Naive thymus-derived CD4-positive, alpha-beta T cell (primary cell): ENCODE measurements at regions of chr19 and their contacts with region 1.

Region 1: GRCh38 chr19:15091901-15092753 is 10.1 kb downstream of the OR1I1 start:
- DNase-seq: peak in 7 of 9 donors; percentile 45 to 72 (median 67)
- ATAC-seq: peak; percentile 84
- H3K4me3 ChIP-seq: no peak overlapping the region
- H3K4me3 Mint-ChIP-seq: no peak overlapping the region
- H3K27ac ChIP-seq: no peak overlapping the region
- H3K27ac Mint-ChIP-seq: peak overlapping the region in 3 of 9 donors; percentile 32 to 72 (median 53)
- H3K4me1 ChIP-seq: peaks cover 4 to 6% of the 10 kb centered on the region in 2 donors
- H3K4me1 Mint-ChIP-seq: peaks cover 0 to 9% (median 4%) of the 10 kb centered on the region in 7 donors
- H3K27me3 ChIP-seq: no peaks in the 10 kb centered on the region
- H3K27me3 Mint-ChIP-seq: peaks cover 0 to 18% (median 9%) of the 10 kb centered on the region in 5 donors

Region 2: DNA sequence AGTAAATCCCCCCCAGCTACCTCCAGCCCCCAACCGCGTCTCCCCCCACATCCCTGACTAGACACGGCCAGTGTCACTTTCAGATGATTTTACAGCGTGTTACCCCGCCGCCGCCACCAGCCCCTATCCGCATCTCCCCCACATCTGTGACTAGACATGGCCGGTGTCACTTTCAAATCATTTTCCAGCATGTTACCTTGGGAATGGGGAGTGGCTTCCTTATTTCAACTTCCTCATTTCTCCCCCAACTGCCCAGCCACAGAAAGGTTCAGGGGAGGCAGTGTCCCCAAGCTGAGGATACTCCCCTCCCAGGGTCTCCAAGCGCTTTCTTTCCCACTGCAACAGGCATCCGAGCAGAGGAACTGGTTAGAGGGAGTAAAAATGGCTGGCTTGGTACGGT is 904.6 kb before region 1 on chr19:
- CTCF ChIA-PET with region 1: no interaction called
- POLR2A ChIA-PET with region 1: no interaction called
- intact Hi-C with region 1: no loop called
- DNase-seq: no peak
- ATAC-seq: no peak
- H3K4me3 ChIP-seq: no peak overlapping the region
- H3K4me3 Mint-ChIP-seq: no peak overlapping the region
- H3K27ac ChIP-seq: no peak overlapping the region
- H3K27ac Mint-ChIP-seq: peak overlapping the region in 1 of 9 donors; percentile 78
- H3K4me1 ChIP-seq: no peaks in the 10 kb centered on the region
- H3K4me1 Mint-ChIP-seq: peaks cover 8 to 22% (median 17%) of the 10 kb centered on the region in 7 donors
- H3K27me3 ChIP-seq: no peaks in the 10 kb centered on the region
- H3K27me3 Mint-ChIP-seq: no peaks in the 10 kb centered on the region

Region 3: DNA sequence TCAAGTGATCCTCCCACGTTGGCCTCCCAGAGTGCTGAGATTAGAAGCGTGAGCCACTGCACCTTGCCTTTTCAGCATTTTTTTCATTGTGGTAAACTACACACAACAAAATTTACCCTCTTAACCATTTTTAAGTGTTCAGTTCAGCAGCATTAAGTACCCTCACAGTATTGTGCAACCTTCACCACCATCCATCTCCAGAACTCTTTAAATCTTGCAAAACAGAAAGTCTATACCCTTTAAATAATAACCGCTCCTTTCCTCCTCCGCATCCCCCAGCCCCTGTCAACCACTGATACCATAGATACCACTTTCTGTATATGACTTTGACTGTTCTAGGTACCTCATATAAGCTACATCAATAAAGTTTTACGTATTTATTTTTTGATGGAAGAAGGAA is 63.6 kb before region 1 on chr19:
- CTCF ChIA-PET with region 1: no interaction called
- POLR2A ChIA-PET with region 1: no interaction called
- intact Hi-C with region 1: no loop called
- DNase-seq: no peak
- ATAC-seq: no peak
- H3K4me3 ChIP-seq: no peak overlapping the region
- H3K4me3 Mint-ChIP-seq: no peak overlapping the region
- H3K27ac ChIP-seq: no peak overlapping the region
- H3K27ac Mint-ChIP-seq: no peak overlapping the region
- H3K4me1 ChIP-seq: no peaks in the 10 kb centered on the region
- H3K4me1 Mint-ChIP-seq: no peaks in the 10 kb centered on the region
- H3K27me3 ChIP-seq: no peaks in the 10 kb centered on the region
- H3K27me3 Mint-ChIP-seq: peaks cover 0 to 14% (median 8%) of the 10 kb centered on the region in 5 donors

Region 4: GRCh38 chr19:15125232-15126067 is 33.3 kb after region 1 on chr19:
- CTCF ChIA-PET with region 1: interaction called, 3 read pairs
- POLR2A ChIA-PET with region 1: interaction called, 6 read pairs
- intact Hi-C with region 1: loop called in 1 of 2 experiments (anchors 1 kb)
- DNase-seq: peak; percentile 94 to 98 (median 96)
- ATAC-seq: peak; percentile 93
- H3K4me3 ChIP-seq: peak overlapping the region; percentile 90
- H3K4me3 Mint-ChIP-seq: peak overlapping the region; percentile 89 to 100 (median 98)
- H3K27ac ChIP-seq: peak overlapping the region; percentile 92
- H3K27ac Mint-ChIP-seq: peak overlapping the region; percentile 91 to 100 (median 97)
- H3K4me1 ChIP-seq: peaks cover 0 to 25% of the 10 kb centered on the region in 2 donors
- H3K4me1 Mint-ChIP-seq: peaks cover 27 to 59% (median 44%) of the 10 kb centered on the region in 7 donors
- H3K27me3 ChIP-seq: no peaks in the 10 kb centered on the region
- H3K27me3 Mint-ChIP-seq: peaks cover 0 to 2% (median 0%) of the 10 kb centered on the region in 5 donors

Region 5: DNA sequence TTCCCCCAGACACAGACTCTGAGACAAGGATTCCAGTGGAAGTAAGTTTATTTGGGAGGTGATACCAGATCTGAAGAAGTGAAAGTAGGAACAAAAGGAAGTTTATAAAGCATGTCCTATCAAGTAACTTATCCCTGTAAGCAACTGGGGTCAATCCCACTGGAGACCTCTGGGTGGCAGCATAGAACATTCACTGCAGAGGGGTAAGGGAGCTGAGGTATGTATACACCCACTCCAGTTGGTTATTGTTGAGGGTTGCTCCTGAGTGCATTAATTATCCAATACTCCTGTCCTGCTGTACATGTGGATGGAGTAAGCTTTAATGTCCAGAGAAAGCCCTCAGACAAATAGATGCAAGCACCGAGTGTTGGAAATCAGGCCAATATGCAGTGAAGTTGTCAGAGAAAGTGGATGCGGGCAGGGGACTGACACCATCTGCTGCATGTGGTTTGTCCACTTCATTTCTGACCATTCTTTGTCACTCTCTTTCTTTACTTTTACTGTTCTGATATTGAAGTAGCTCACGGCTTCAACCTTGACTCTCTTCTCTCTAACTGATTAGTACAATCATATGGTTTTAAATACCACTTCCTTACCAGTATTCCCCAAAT is 62.0 kb after region 1 on chr19:
- CTCF ChIA-PET with region 1: interaction called, 30 read pairs
- POLR2A ChIA-PET with region 1: no interaction called
- intact Hi-C with region 1: loop called (anchors 1 kb)
- DNase-seq: peak in 1 of 9 donors; percentile 8
- ATAC-seq: peak; percentile 63
- H3K4me3 ChIP-seq: no peak overlapping the region
- H3K4me3 Mint-ChIP-seq: no peak overlapping the region
- H3K27ac ChIP-seq: no peak overlapping the region
- H3K27ac Mint-ChIP-seq: no peak overlapping the region
- H3K4me1 ChIP-seq: no peaks in the 10 kb centered on the region
- H3K4me1 Mint-ChIP-seq: peaks cover 4 to 14% (median 7%) of the 10 kb centered on the region in 7 donors
- H3K27me3 ChIP-seq: no peaks in the 10 kb centered on the region
- H3K27me3 Mint-ChIP-seq: peaks cover 5 to 12% (median 8%) of the 10 kb centered on the region in 5 donors

Region 6: DNA sequence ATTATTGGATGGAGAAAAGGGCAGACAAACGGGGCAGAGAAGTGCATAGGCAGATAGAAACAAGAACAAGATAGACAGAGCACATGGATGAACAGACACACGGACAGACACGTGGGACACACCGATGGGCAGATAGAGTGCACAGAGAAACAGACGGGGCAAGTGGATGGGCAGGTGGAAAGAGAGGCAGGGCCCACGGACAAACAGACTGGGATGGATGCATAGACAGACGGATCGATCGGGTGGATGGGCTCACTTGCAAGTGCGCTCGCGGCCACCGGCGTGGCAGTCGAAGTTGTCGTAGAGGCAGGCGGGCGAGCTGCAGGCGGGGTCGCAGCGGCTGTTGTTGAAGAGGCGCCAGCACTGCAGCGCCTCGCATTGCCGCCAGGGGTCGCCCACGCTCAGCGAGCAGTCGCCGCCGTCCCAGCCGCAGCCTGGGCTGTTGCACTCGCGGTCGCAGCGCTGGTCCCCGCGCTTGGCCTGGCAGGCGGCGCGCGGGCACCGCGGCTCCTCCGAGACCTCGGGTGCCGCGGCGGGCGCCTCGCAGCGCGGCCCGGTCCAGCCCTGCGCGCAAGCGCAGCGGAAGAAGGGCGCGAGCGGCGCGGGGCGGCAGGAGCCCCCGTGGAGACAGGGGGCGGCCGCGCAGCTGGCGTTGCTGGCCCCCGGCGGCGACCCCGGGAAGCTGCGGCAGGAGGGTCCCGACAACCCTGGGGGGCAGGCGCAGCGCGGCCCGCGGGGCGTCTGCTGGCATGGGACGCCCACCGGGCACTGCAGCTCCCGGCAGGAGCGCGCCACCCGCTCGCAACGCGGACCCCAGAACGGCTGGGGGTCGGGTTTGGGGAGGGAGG is 85.4 kb after region 1 on chr19:
- CTCF ChIA-PET with region 1: no interaction called
- POLR2A ChIA-PET with region 1: no interaction called
- intact Hi-C with region 1: loop called in 1 of 2 experiments (anchors 1 kb)
- DNase-seq: peak; percentile 66 to 88 (median 82)
- ATAC-seq: peak; percentile 99
- H3K4me3 ChIP-seq: no peak overlapping the region
- H3K4me3 Mint-ChIP-seq: peak overlapping the region; percentile 29 to 84 (median 53)
- H3K27ac ChIP-seq: no peak overlapping the region
- H3K27ac Mint-ChIP-seq: peak overlapping the region in 1 of 9 donors; percentile 47
- H3K4me1 ChIP-seq: peaks cover 0 to 5% of the 10 kb centered on the region in 2 donors
- H3K4me1 Mint-ChIP-seq: peaks cover 4 to 8% (median 5%) of the 10 kb centered on the region in 7 donors
- H3K27me3 ChIP-seq: no peaks in the 10 kb centered on the region
- H3K27me3 Mint-ChIP-seq: peaks cover 0 to 20% (median 9%) of the 10 kb centered on the region in 5 donors

Region 7: GRCh38 chr19:15252398-15253018 is 160.4 kb after region 1 on chr19:
- CTCF ChIA-PET with region 1: interaction called, 10 read pairs
- POLR2A ChIA-PET with region 1: no interaction called
- intact Hi-C with region 1: no loop called
- DNase-seq: no peak
- ATAC-seq: no peak
- H3K4me3 ChIP-seq: no peak overlapping the region
- H3K4me3 Mint-ChIP-seq: no peak overlapping the region
- H3K27ac ChIP-seq: no peak overlapping the region
- H3K27ac Mint-ChIP-seq: peak overlapping the region in 2 of 9 donors; percentile 14 to 34
- H3K4me1 ChIP-seq: no peaks in the 10 kb centered on the region
- H3K4me1 Mint-ChIP-seq: peaks cover 0 to 5% (median 3%) of the 10 kb centered on the region in 7 donors
- H3K27me3 ChIP-seq: no peaks in the 10 kb centered on the region
- H3K27me3 Mint-ChIP-seq: no peaks in the 10 kb centered on the region

Region 8: DNA sequence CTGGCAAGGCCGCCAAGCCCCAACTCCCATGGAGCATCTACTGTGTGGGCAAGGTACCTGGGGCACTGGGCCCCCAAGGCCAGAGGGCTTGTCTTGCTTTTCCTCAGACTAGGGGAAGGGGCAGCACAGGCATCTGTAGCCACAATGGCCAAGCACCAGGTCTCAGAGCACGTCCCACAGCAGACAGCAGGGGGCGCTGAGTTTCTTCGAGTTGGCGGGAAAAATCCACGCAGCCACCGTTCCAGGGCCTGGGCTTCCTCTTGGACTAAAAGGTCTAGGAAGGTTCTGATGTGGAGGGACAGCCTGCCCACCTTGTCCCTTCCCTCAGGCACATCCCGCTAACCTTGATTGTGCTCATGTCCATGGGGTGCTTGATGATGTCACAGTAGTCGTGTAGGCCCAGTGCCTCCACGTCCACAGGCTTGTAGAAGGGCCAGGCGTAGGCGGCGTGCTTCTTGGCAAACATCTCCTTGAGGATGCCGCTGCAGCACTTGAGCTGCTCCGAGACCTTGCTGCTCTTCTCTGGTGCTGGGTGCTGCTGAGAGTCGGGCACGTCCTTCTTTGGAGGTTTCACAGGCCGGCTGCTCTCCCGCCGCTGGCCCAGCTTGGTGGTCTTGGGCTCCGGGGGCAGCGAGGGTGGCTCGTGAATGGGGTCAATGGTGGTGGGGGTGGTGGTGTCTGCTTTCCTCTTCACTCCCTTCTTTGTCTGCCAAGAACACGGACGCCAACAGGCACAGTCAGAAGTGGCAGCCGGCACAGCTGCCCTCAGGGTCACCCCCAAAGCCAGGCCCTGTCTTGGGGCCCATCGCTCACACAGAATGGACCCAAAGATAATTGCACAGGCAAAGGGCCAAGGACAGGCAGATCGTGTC is 172.2 kb after region 1 on chr19:
- CTCF ChIA-PET with region 1: interaction called, 3 read pairs
- POLR2A ChIA-PET with region 1: no interaction called
- intact Hi-C with region 1: loop called in 1 of 2 experiments (anchors 5 kb)
- DNase-seq: peak; percentile 54 to 77 (median 65)
- ATAC-seq: peak; percentile 79
- H3K4me3 ChIP-seq: no peak overlapping the region
- H3K4me3 Mint-ChIP-seq: no peak overlapping the region
- H3K27ac ChIP-seq: no peak overlapping the region
- H3K27ac Mint-ChIP-seq: peak overlapping the region in 2 of 9 donors; percentile 14 to 38
- H3K4me1 ChIP-seq: no peaks in the 10 kb centered on the region
- H3K4me1 Mint-ChIP-seq: peaks cover 7 to 19% (median 11%) of the 10 kb centered on the region in 7 donors
- H3K27me3 ChIP-seq: no peaks in the 10 kb centered on the region
- H3K27me3 Mint-ChIP-seq: no peaks in the 10 kb centered on the region